ENCODE measurements at regions of chr6 and their contacts with region 1.

Region 1: GRCh38 chr6:30672445-30673253 is at the start of gene DHX16:
- DNase-seq: peak; percentile 88 to 96
- H3K4me3 ChIP-seq: peak within 1 kb of the TSS; percentile 89
- H3K27ac ChIP-seq: no peak within 1 kb of the TSS
- H3K4me1 ChIP-seq: peaks cover 17% of the 10 kb centered on the region
- H3K27me3 ChIP-seq: no peaks in the 10 kb centered on the region
- CTCF ChIP-seq: peak; percentile 84
- total RNA-seq, gene DHX16: 42.1 and 43.5 TPM in 2 replicates

Region 2: DNA sequence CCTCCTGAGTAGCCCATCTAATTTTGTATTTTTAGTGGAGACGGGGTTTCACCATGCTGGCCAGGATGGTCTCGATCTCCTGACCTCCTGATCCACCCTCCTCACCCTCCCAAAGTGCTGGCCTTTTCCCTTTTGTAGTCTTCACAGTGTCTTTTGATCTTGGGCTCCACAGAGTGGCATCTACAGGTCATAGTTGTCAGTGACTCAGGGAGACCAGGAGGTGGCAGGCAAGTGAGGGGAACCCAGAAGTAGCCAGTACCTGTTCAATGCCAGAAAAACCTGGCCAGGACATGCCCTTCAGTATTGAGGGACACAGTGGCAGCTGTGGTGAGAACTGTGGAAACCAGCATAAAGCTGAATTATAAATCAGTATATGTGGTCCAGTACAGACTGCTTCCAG is 308.1 kb before region 1 on chr6:
- CTCF ChIA-PET with region 1: interaction called, 17 read pairs
- POLR2A ChIA-PET with region 1: no interaction called
- intact Hi-C with region 1: no loop called
- DNase-seq: no peak
- H3K4me3 ChIP-seq: no peak overlapping the region
- H3K27ac ChIP-seq: no peak overlapping the region
- H3K4me1 ChIP-seq: no peaks in the 10 kb centered on the region
- H3K27me3 ChIP-seq: peaks cover 89% of the 10 kb centered on the region
- CTCF ChIP-seq: peak; percentile 48; the same call in 1 of the 2 replicates

Region 3: DNA sequence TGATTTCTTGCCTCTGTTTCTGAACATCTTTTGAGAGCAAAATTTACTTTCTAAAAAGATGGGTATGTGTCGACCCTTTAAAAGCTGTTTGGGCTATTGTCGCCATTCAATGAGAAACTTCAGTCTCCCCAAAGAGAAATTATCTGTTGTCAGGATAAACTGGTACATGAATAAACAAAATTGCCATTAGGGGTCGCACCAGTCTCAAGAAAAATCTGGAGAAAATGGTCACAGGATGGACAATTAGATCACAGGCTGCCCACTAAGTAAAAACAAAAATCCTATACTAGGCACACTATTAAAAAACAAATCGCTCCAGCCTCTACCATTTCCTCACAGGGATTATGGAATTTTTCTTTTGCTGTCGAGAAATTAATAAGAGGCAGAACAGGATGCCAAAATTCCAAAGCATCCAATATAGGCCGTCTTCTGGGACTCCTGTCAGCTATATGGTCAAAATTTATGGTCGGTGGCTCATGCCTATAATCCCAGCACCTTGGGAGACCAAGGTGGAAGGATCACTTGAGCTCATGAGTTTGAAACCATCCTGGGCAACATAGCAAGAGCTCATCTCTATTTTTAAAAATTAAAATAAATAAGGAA is 188.9 kb before region 1 on chr6:
- CTCF ChIA-PET with region 1: no interaction called
- POLR2A ChIA-PET with region 1: interaction called, 5 read pairs
- intact Hi-C with region 1: loop called (anchors 2 kb)
- DNase-seq: peak; percentile 45 to 56
- H3K4me3 ChIP-seq: no peak overlapping the region
- H3K27ac ChIP-seq: no peak overlapping the region
- H3K4me1 ChIP-seq: no peaks in the 10 kb centered on the region; the same call in 1 of the 2 replicates
- H3K27me3 ChIP-seq: peaks cover 30% of the 10 kb centered on the region
- CTCF ChIP-seq: peak; percentile 74